ENCODE measurements at regions of chrX and their contacts with region 1.

Region 1: GRCh38 chrX:79146640-79147390 is 2.3 kb downstream of the GPR174 start:
- DNase-seq: no peak
- H3K4me3 Mint-ChIP-seq: peak overlapping the region; percentile 99
- H3K27ac Mint-ChIP-seq: peak overlapping the region; percentile 94
- H3K4me1 Mint-ChIP-seq: peaks cover 53% of the 10 kb centered on the region
- H3K27me3 Mint-ChIP-seq: no peaks in the 10 kb centered on the region

Region 2: DNA sequence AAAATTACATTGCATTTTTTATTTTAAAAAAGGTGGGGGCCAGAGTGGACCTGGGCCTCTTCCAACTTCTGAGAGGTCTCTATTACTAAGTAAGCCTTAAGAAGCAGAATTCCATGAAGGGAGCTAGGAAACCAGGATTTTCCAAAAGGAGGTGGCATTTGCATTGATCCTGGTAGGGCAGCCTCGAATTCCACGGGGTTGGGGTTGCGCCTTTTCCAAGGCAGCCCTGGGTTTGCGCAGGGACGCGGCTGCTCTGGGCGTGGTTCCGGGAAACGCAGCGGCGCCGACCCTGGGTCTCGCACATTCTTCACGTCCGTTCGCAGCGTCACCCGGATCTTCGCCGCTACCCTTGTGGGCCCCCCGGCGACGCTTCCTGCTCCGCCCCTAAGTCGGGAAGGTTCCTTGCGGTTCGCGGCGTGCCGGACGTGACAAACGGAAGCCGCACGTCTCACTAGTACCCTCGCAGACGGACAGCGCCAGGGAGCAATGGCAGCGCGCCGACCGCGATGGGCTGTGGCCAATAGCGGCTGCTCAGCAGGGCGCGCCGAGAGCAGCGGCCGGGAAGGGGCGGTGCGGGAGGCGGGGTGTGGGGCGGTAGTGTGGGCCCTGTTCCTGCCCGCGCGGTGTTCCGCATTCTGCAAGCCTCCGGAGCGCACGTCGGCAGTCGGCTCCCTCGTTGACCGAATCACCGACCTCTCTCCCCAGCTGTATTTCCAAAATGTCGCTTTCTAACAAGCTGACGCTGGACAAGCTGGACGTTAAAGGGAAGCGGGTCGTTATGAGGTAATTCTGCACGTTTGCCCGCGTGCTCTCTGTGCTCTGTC is 1043.0 kb before region 1 on chrX and contains the start of gene PGK1:
- intact Hi-C with region 1: loop called (anchors 10 kb)
- DNase-seq: peak; percentile 92
- H3K4me3 Mint-ChIP-seq: peak within 1 kb of the TSS; percentile 97
- H3K27ac Mint-ChIP-seq: peak within 1 kb of the TSS; percentile 91
- H3K4me1 Mint-ChIP-seq: peaks cover 51% of the 10 kb centered on the region
- H3K27me3 Mint-ChIP-seq: no peaks in the 10 kb centered on the region
- total RNA-seq, gene PGK1: 799 and 814 TPM in 2 replicates

Region 3: DNA sequence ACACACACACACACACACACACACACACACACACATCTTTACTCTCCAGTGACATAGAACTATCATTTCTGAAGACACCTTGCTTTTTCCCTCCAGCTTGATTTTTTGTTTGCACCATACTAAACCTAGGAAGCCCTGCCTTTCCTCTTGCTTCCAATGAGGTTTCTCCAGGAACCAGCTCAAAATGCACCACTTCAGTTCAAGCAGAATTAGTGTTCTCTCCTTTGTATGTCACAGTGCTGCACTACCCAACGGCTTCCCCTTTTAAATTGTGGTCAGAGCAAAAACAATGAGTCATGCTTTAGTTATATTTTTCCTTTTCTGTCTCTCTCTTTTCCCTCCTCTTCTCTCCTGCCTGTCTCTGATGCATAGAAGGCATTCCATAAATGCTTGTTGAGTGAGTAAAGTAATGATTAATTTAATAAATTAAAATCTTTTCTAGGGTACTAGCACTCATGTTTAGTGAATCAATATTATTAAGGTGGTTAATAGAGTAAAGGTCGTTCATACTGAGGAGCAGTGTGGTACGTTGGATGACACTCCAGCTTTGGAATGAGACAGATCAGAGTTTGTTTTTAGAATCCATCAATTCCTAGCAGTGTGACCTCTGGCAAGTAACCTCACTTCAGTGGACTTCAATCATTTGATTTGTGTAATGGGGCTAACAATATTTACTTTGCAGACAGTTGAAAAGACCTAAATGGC is 493.5 kb before region 1 on chrX:
- intact Hi-C with region 1: loop called (anchors 5 kb)
- DNase-seq: no peak
- H3K4me3 Mint-ChIP-seq: peak overlapping the region; percentile 55
- H3K27ac Mint-ChIP-seq: peak overlapping the region; percentile 49
- H3K4me1 Mint-ChIP-seq: peaks cover 38% of the 10 kb centered on the region
- H3K27me3 Mint-ChIP-seq: no peaks in the 10 kb centered on the region

Region 4: DNA sequence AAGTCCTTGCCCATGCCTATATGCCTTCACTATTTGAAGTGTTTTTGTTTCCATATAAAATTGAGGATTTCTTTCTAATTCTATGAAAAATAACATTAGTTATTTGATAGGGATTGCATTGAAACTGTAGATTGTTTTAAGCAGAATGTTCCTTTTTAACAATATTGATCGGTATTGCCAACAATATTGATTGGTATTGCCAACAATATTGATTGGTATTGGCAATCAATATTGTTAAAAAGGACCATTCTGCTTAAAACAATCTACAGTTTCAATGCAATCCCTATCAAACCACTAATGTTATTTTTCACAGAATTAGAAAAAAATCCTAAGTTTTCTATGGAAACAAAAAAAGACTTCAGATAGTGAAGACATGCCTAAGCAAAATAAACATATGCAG is 24.8 kb before region 1 on chrX:
- intact Hi-C with region 1: no loop called
- DNase-seq: no peak
- H3K4me3 Mint-ChIP-seq: no peak overlapping the region
- H3K27ac Mint-ChIP-seq: no peak overlapping the region
- H3K4me1 Mint-ChIP-seq: no peaks in the 10 kb centered on the region
- H3K27me3 Mint-ChIP-seq: no peaks in the 10 kb centered on the region

Region 5: DNA sequence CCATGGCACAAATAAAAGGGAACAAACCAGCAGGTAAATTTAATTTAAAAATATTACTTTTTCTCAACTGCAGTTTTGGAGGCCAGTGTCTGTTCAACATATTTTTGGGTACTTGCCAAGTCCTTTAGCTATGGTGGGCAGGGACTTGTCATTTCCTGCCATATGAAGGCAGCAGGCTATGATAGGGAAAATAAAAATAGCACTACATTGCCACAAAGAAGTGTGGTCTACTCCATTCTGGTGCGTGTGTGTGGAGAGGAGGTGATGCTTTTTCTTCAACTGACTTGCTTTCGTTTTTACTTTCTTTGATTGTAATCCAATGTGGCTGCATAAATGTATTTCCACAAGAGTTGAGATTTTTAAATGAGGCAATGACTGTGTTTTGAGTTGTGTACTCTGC is 14.8 kb after region 1 on chrX:
- intact Hi-C with region 1: loop called (anchors 1 kb)
- DNase-seq: peak; percentile 48
- H3K4me3 Mint-ChIP-seq: peak overlapping the region; percentile 89
- H3K27ac Mint-ChIP-seq: peak overlapping the region; percentile 99
- H3K4me1 Mint-ChIP-seq: peaks cover 53% of the 10 kb centered on the region
- H3K27me3 Mint-ChIP-seq: no peaks in the 10 kb centered on the region

Region 6: DNA sequence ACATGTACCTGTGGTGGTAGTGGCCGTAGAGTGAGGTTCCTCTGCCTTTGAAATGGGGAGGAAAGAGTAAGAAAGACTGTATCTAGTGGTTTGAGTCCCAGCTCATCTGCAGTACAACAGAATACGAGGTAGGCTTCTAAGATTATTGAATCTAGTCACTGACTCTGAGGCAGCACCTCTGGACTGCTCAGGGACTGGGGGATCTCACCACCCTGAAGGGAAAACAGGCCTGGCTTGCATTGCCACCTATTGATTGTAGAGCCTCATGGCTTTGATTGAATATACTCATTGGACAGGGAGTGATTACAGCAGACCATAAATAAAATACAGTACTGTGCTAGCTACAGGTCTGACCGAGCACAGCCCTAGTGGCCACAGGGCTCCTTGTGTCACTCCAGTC is 48.2 kb after region 1 on chrX:
- intact Hi-C with region 1: no loop called
- DNase-seq: no peak
- H3K4me3 Mint-ChIP-seq: no peak overlapping the region
- H3K27ac Mint-ChIP-seq: no peak overlapping the region
- H3K4me1 Mint-ChIP-seq: no peaks in the 10 kb centered on the region
- H3K27me3 Mint-ChIP-seq: no peaks in the 10 kb centered on the region

Region 7: GRCh38 chrX:79259073-79259689 is 112.4 kb after region 1 on chrX:
- intact Hi-C with region 1: loop called (anchors 1 kb)
- DNase-seq: peak; percentile 57
- H3K4me3 Mint-ChIP-seq: peak overlapping the region; percentile 45
- H3K27ac Mint-ChIP-seq: peak overlapping the region; percentile 87
- H3K4me1 Mint-ChIP-seq: peaks cover 86% of the 10 kb centered on the region
- H3K27me3 Mint-ChIP-seq: no peaks in the 10 kb centered on the region

Region 8: DNA sequence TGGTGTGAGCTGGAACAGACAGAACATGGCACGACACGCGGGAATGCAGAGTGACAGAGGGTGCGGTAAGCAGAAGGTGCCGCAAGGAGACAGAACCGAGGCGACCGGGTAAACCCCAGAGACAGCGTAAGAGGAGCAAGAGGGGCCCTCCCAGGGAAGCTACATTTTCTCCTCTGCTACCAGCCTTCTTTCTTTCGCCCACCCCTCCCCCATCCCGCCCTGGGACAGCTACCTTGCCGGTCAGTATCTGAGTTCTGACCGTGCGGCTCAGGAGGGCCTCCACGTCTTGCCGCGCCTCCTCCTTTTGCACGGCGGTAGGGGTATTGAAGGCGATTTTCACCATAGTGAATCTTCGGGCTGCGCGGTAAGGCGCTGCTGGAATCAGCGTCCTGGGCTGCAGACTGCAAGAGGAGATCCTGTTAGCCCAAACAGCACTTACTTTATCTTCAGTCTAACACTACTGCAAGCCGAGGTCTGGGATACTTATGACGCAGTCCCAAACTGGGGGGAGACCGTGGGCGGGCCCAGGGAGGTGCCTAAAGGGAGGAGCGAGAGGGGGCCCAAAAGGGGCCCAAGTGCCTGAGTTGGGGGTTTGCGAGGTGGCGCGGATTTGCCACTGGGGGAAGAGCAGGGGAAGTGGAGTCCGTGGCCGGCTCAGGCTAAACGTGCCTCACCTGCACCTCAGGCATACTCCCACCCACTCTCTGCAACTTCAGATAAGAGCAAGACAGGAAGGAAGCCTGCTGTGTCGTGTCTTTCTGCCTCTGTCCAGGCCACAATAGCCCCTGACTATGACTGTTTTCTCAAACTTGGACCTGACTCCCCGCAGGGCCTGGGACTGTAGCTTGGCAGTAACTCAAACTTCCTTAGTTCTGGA is 220.3 kb after region 1 on chrX and contains the start of gene ITM2A:
- intact Hi-C with region 1: loop called (anchors 2 kb)
- DNase-seq: peak; percentile 37
- H3K4me3 Mint-ChIP-seq: peak within 1 kb of the TSS; percentile 94
- H3K27ac Mint-ChIP-seq: peak within 1 kb of the TSS; percentile 95
- H3K4me1 Mint-ChIP-seq: peaks cover 35% of the 10 kb centered on the region
- H3K27me3 Mint-ChIP-seq: no peaks in the 10 kb centered on the region
- total RNA-seq, gene ITM2A: 114 and 116 TPM in 2 replicates